Activated CD4-positive, alpha-beta memory T cell treated with anti-CD3 and anti-CD28 coated beads for 36 hours (primary cell): ENCODE measurements at regions of chr7 and their contacts with region 1.

Region 1: GRCh38 chr7:116984917-116985316 is 31.6 kb downstream of the ST7 start:
- DNase-seq: no peak
- H3K4me3 Mint-ChIP-seq: no peak overlapping the region
- H3K27ac Mint-ChIP-seq: no peak overlapping the region
- H3K4me1 Mint-ChIP-seq: peaks cover 4% of the 10 kb centered on the region
- H3K27me3 Mint-ChIP-seq: no peaks in the 10 kb centered on the region

Region 2: GRCh38 chr7:117041007-117041406 is 56.1 kb after region 1 on chr7:
- CTCF ChIA-PET with region 1: no interaction called
- POLR2A ChIA-PET with region 1: no interaction called
- intact Hi-C with region 1: no loop called
- DNase-seq: no peak
- H3K4me3 Mint-ChIP-seq: no peak overlapping the region
- H3K27ac Mint-ChIP-seq: no peak overlapping the region
- H3K4me1 Mint-ChIP-seq: peaks cover 10% of the 10 kb centered on the region
- H3K27me3 Mint-ChIP-seq: no peaks in the 10 kb centered on the region

Region 3: GRCh38 chr7:117119192-117119924 is 134.4 kb after region 1 on chr7:
- CTCF ChIA-PET with region 1: interaction called, 373 read pairs
- POLR2A ChIA-PET with region 1: interaction called, 3 read pairs
- intact Hi-C with region 1: loop called (anchors 1 kb)
- DNase-seq: peak; percentile 80
- H3K4me3 Mint-ChIP-seq: no peak overlapping the region
- H3K27ac Mint-ChIP-seq: no peak overlapping the region
- H3K4me1 Mint-ChIP-seq: peaks cover 1% of the 10 kb centered on the region
- H3K27me3 Mint-ChIP-seq: no peaks in the 10 kb centered on the region